Posterior cingulate gyrus (tissue), 11 donors: ENCODE measurements at regions of chr2 and their contacts with region 1.

Region 1: GRCh38 chr2:148509288-148509902 is 135.2 kb upstream of the EPC2 start:
- DNase-seq: peak; percentile 51 to 95 (median 78)

Region 2: DNA sequence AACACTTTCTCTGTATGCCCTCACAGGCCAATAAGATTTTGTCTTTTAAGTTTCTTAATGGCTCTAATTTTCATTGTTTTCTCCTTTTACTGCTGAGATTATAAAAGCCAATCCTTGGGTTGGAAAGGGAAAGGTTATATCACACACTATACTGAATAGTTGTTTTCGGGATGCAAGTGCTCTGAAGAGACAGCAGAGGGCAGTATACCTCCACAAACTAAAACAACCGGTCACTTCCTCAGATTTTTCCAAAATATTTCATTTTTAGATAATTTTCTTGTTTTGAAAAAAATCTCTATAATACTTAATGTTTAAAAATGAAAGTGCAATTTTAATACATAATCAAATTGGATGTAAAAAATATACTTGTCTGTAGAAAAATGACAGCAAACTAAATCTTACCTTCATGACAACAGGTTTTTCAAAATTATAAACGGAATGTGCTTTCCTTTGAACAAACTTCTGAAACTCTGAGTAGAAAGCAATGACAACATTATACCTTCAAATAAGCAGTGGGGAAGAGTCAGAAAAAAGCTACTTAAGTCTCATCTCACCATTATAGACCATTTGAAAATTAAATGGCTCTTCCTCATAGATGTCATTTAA is 571.5 kb before region 1 on chr2:
- intact Hi-C with region 1: loop called (anchors 1 kb)
- DNase-seq: no peak

Region 3: GRCh38 chr2:147989809-147990403 is 519.5 kb before region 1 on chr2:
- intact Hi-C with region 1: loop called (anchors 5 kb)
- DNase-seq: no peak

Region 4: GRCh38 chr2:148493822-148494563 is 15.4 kb before region 1 on chr2:
- intact Hi-C with region 1: no loop called
- DNase-seq: no peak